Endothelial cell of umbilical vein (primary cell): ENCODE measurements at regions of chr13 and their contacts with region 1.

Region 1: GRCh38 chr13:44435142-44435982 is 61.7 kb downstream of the SERP2 start:
- DNase-seq: peak; percentile 99
- H3K4me3 ChIP-seq: peak overlapping the region; percentile 86 to 99 (median 99)
- H3K27ac ChIP-seq: peak overlapping the region; percentile 95
- H3K4me1 ChIP-seq: peaks cover 16% of the 10 kb centered on the region
- H3K27me3 ChIP-seq: no peaks in the 10 kb centered on the region
- CTCF ChIP-seq: no peak
- POLR2A ChIP-seq: no peak

Region 2: GRCh38 chr13:43905435-43906031 is 529.8 kb before region 1 on chr13:
- CTCF ChIA-PET with region 1: interaction called, 48 read pairs
- POLR2A ChIA-PET with region 1: interaction called, 4 read pairs
- dilution Hi-C with region 1: no loop called
- intact Hi-C with region 1: loop called (anchors 1 kb)
- DNase-seq: peak; percentile 68
- H3K4me3 ChIP-seq: no peak overlapping the region
- H3K27ac ChIP-seq: no peak overlapping the region
- H3K4me1 ChIP-seq: no peaks in the 10 kb centered on the region
- H3K27me3 ChIP-seq: peaks cover 0 to 6% of the 10 kb centered on the region in 2 experiments
- CTCF ChIP-seq: peak; percentile 43 to 45
- POLR2A ChIP-seq: no peak

Region 3: GRCh38 chr13:44141725-44142539 is 293.4 kb before region 1 on chr13:
- CTCF ChIA-PET with region 1: no interaction called
- POLR2A ChIA-PET with region 1: interaction called, 13 read pairs
- dilution Hi-C with region 1: no loop called
- intact Hi-C with region 1: loop called (anchors 1 kb)
- DNase-seq: peak; percentile 96
- H3K4me3 ChIP-seq: peak overlapping the region; percentile 43 to 68 (median 50)
- H3K27ac ChIP-seq: peak overlapping the region; percentile 71
- H3K4me1 ChIP-seq: peaks cover 18% of the 10 kb centered on the region
- H3K27me3 ChIP-seq: no peaks in the 10 kb centered on the region
- CTCF ChIP-seq: no peak
- POLR2A ChIP-seq: peak; percentile 79

Region 4: GRCh38 chr13:44237276-44237767 is 198.0 kb before region 1 on chr13:
- CTCF ChIA-PET with region 1: interaction called, 43 read pairs
- POLR2A ChIA-PET with region 1: interaction called, 21 read pairs
- dilution Hi-C with region 1: no loop called
- intact Hi-C with region 1: loop called (anchors 1 kb)
- DNase-seq: peak; percentile 97
- H3K4me3 ChIP-seq: no peak overlapping the region
- H3K27ac ChIP-seq: peak overlapping the region; percentile 84
- H3K4me1 ChIP-seq: peaks cover 21% of the 10 kb centered on the region
- H3K27me3 ChIP-seq: no peaks in the 10 kb centered on the region
- CTCF ChIP-seq: no peak
- POLR2A ChIP-seq: no peak

Region 5: GRCh38 chr13:44306401-44307192 is 128.8 kb before region 1 on chr13:
- CTCF ChIA-PET with region 1: interaction called, 10 read pairs
- POLR2A ChIA-PET with region 1: interaction called, 35 read pairs
- dilution Hi-C with region 1: no loop called
- intact Hi-C with region 1: loop called (anchors 1 kb)
- DNase-seq: peak; percentile 99
- H3K4me3 ChIP-seq: peak overlapping the region in 1 of 3 experiments; percentile 50
- H3K27ac ChIP-seq: peak overlapping the region; percentile 100
- H3K4me1 ChIP-seq: peaks cover 23% of the 10 kb centered on the region
- H3K27me3 ChIP-seq: no peaks in the 10 kb centered on the region
- CTCF ChIP-seq: no peak
- POLR2A ChIP-seq: no peak

Region 6: DNA sequence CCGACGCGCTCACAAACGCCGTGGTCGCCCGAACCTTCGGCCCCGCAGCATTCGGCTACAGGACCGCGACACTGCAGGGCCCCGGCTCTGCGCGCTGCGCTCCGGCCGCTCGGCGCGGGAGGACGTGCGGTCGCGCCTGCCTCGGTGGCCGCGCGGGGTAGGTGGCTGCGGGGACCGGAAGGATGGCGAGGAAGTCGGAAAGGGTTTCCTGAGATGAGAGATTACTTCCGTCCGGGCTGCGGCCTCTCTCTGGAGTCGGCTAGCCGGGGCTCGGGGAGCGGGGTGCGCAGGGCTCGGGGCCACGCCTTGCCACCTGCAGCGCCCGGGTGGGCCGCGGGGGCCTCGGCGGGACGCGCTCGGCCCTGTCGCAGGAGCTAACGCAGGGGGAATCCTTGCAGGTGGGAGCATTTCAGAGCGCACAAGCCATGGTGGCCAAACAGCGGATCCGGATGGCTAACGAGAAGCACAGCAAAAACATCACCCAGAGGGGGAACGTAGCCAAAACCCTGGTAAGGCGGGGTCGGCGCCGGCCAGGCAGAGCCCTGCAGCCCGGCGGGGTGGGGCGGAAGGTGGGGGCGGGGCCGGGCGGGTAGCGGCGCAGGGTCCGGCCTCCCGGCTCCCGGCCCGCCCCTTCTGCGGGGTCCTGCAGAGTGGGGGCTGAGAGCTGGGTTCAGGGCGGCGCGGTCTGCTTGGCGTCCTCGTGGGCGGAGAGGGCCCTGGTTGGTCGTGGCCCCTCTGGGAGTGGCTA is 61.6 kb before region 1 on chr13 and contains the start of gene SERP2:
- CTCF ChIA-PET with region 1: interaction called, 12 read pairs
- POLR2A ChIA-PET with region 1: interaction called, 4 read pairs
- dilution Hi-C with region 1: no loop called
- intact Hi-C with region 1: no loop called
- DNase-seq: no peak
- H3K4me3 ChIP-seq: peak within 1 kb of the TSS; percentile 36 to 54 (median 43)
- H3K27ac ChIP-seq: no peak within 1 kb of the TSS
- H3K4me1 ChIP-seq: peaks cover 6% of the 10 kb centered on the region
- H3K27me3 ChIP-seq: no peaks in the 10 kb centered on the region
- CTCF ChIP-seq: no peak
- POLR2A ChIP-seq: no peak
- total RNA-seq, gene SERP2: 0.85 TPM in 1 of 2 replicates, not detected in the other

Region 7: GRCh38 chr13:44637581-44637980 is 202.2 kb after region 1 on chr13:
- CTCF ChIA-PET with region 1: no interaction called
- POLR2A ChIA-PET with region 1: no interaction called
- dilution Hi-C with region 1: no loop called
- intact Hi-C with region 1: no loop called
- DNase-seq: no peak
- H3K4me3 ChIP-seq: no peak overlapping the region
- H3K27ac ChIP-seq: no peak overlapping the region
- H3K4me1 ChIP-seq: no peaks in the 10 kb centered on the region
- H3K27me3 ChIP-seq: no peaks in the 10 kb centered on the region
- CTCF ChIP-seq: no peak
- POLR2A ChIP-seq: no peak